WTC11 (cell line): ENCODE measurements at regions of chr9 and their contacts with region 1.

Region 1: GRCh38 chr9:70498866-70499265 is 84.4 kb upstream of the KLF9 start:
- DNase-seq: no peak
- ATAC-seq: no peak
- H3K4me3 Mint-ChIP-seq: no peak overlapping the region
- H3K27ac Mint-ChIP-seq: no peak overlapping the region
- H3K4me1 Mint-ChIP-seq: peaks cover 6% of the 10 kb centered on the region
- H3K27me3 Mint-ChIP-seq: no peaks in the 10 kb centered on the region; the same call in 1 of the 2 replicates
- CTCF ChIP-seq: no peak

Region 2: DNA sequence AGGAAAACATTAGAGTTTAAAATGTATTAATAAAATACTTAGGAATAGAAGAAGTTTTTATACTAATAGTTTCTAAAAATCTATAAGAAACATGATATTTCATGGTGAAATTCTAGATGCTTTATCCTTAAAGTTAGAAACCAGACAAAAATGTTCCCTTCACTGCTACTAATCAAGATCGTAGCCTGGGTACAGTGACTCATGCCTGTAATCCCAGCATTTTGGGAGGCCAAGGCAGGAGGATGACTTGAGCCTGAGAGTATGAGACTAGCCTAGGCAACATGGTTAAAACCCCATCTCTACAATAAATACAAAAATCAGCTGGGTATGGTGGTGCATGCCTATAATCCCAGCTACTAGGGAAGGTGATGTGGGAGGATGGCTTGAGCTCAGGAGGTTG is 54.0 kb before region 1 on chr9:
- CTCF ChIA-PET with region 1: no interaction called
- POLR2A ChIA-PET with region 1: no interaction called
- DNase-seq: no peak
- ATAC-seq: no peak
- H3K4me3 Mint-ChIP-seq: no peak overlapping the region
- H3K27ac Mint-ChIP-seq: no peak overlapping the region
- H3K4me1 Mint-ChIP-seq: no peaks in the 10 kb centered on the region
- H3K27me3 Mint-ChIP-seq: no peaks in the 10 kb centered on the region; the same call in 1 of the 2 replicates
- CTCF ChIP-seq: no peak

Region 3: DNA sequence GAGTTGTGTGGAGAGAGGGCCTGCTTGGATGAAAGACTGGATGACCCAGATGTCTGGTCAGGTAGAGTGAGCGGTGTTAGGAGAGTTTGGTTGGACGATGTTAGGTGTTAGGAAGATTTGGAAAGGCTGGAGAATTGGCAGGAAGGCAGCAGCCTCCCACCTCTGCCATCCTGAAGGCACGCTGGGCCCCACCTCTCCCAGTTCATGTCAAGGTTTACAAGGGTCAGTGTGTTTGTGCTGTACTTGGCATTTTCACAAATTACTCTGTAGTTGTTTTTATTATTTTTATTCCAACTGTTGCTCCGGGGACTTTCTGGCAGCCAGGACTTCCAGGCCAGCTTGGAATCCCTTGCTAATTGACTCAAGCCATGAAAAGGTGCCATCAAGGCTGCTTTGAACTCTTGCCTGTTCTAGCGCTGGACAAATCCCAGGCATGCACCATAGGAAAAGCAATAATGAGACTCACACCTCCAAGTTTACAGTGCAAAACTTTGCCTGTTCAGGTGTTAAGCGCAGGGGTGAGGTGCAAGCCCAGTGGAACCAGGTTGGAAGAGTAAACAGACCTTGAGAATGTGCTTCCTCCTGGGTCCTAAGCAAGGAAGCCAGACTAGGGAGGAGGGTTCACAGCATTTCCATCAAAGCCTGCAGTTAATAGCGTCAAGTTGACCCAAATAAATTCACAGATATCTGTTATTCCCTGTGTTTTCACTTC is 42.7 kb before region 1 on chr9:
- CTCF ChIA-PET with region 1: no interaction called
- POLR2A ChIA-PET with region 1: no interaction called
- DNase-seq: no peak
- ATAC-seq: no peak
- H3K4me3 Mint-ChIP-seq: no peak overlapping the region
- H3K27ac Mint-ChIP-seq: 0 out of 2 replicates have a peak overlapping the region, but pooled peaks have one; percentile 48
- H3K4me1 Mint-ChIP-seq: peaks cover 4% of the 10 kb centered on the region; the same call in 1 of the 2 replicates
- H3K27me3 Mint-ChIP-seq: no peaks in the 10 kb centered on the region
- CTCF ChIP-seq: no peak

Region 4: GRCh38 chr9:70510157-70510770 is 11.4 kb after region 1 on chr9:
- CTCF ChIA-PET with region 1: interaction called, 13 read pairs
- POLR2A ChIA-PET with region 1: interaction called, 3 read pairs
- DNase-seq: peak; percentile 65
- ATAC-seq: peak; percentile 73
- H3K4me3 Mint-ChIP-seq: no peak overlapping the region
- H3K27ac Mint-ChIP-seq: no peak overlapping the region
- H3K4me1 Mint-ChIP-seq: peaks cover 7% of the 10 kb centered on the region
- H3K27me3 Mint-ChIP-seq: no peaks in the 10 kb centered on the region
- CTCF ChIP-seq: peak; percentile 61

Region 5: DNA sequence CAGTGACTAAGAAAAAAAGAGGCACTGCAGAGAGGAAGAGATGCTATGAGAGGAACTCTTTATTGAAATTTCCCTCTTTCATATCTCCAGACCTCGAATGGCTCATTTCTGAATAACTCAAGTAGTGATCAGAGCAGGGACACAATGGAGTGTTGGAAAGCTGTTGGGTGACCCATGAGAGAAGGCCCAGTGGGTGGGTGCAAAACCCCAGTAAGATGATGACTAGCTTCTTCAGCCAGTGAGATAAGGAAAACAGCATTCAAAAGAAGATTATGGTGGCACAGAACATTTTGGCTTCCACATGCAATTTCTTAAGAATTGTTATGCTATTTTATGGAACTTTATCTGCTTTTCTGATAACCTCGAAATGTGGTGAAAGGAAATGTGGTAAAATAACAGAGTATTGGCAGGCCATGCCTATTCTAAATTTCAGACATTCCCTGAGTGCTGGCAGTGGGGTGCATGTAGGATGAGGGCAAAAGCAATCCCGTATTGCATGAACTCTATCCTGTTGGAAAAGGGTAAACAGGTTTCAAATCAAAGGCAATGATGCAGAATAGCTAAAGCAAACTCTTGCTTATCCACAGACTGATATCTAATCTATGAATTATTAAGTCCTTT is 43.6 kb after region 1 on chr9:
- CTCF ChIA-PET with region 1: no interaction called
- POLR2A ChIA-PET with region 1: no interaction called
- DNase-seq: no peak
- ATAC-seq: no peak
- H3K4me3 Mint-ChIP-seq: no peak overlapping the region
- H3K27ac Mint-ChIP-seq: no peak overlapping the region
- H3K4me1 Mint-ChIP-seq: peaks cover 22% of the 10 kb centered on the region
- H3K27me3 Mint-ChIP-seq: no peaks in the 10 kb centered on the region
- CTCF ChIP-seq: no peak

Region 6: GRCh38 chr9:70553707-70554673 is 55.1 kb after region 1 on chr9:
- CTCF ChIA-PET with region 1: no interaction called
- POLR2A ChIA-PET with region 1: no interaction called
- DNase-seq: peak; percentile 18
- ATAC-seq: peak; percentile 91
- H3K4me3 Mint-ChIP-seq: peak overlapping the region; percentile 16
- H3K27ac Mint-ChIP-seq: peak overlapping the region; percentile 97
- H3K4me1 Mint-ChIP-seq: peaks cover 38% of the 10 kb centered on the region
- H3K27me3 Mint-ChIP-seq: no peaks in the 10 kb centered on the region
- CTCF ChIP-seq: no peak